ENCODE measurements at regions of chr4 and their contacts with region 1.

Region 1: GRCh38 chr4:173494013-173494970 is 35.7 kb downstream of the HAND2 start:
- DNase-seq: peak; percentile 86
- H3K4me3 ChIP-seq: peak overlapping the region in 1 of 2 donors; percentile 29
- H3K27ac ChIP-seq: no peak overlapping the region
- H3K4me1 ChIP-seq: no peaks in the 10 kb centered on the region
- H3K27me3 ChIP-seq: no peaks in the 10 kb centered on the region
- CTCF ChIP-seq: peak; percentile 73 to 80 (median 78)
- POLR2A ChIP-seq: no peak

Region 2: GRCh38 chr4:173436149-173436579 is 58.1 kb before region 1 on chr4:
- intact Hi-C with region 1: loop called (anchors 10 kb)
- DNase-seq: no peak
- H3K4me3 ChIP-seq: no peak overlapping the region
- H3K27ac ChIP-seq: no peak overlapping the region
- H3K4me1 ChIP-seq: no peaks in the 10 kb centered on the region
- H3K27me3 ChIP-seq: no peaks in the 10 kb centered on the region
- CTCF ChIP-seq: no peak
- POLR2A ChIP-seq: no peak

Region 3: GRCh38 chr4:173573286-173573685 is 79.0 kb after region 1 on chr4:
- intact Hi-C with region 1: no loop called
- DNase-seq: no peak
- H3K4me3 ChIP-seq: no peak overlapping the region
- H3K27ac ChIP-seq: no peak overlapping the region
- H3K4me1 ChIP-seq: no peaks in the 10 kb centered on the region
- H3K27me3 ChIP-seq: no peaks in the 10 kb centered on the region
- CTCF ChIP-seq: no peak
- POLR2A ChIP-seq: no peak

Measured in testis (tissue), 5 donors.